ENCODE measurements at regions of chr1 and their contacts with region 1.

Region 1: GRCh38 chr1:34013958-34014737 is 150.3 kb downstream of the HMGB4 start:
- DNase-seq: peak in 1 of 2 donors; percentile 55
- ATAC-seq: peak; percentile 44
- H3K4me3 ChIP-seq: no peak overlapping the region
- H3K27ac ChIP-seq: no peak overlapping the region
- H3K4me1 ChIP-seq: no peaks in the 10 kb centered on the region
- H3K27me3 ChIP-seq: no peaks in the 10 kb centered on the region

Region 2: GRCh38 chr1:33633019-33633801 is 380.9 kb before region 1 on chr1:
- intact Hi-C with region 1: loop called (anchors 10 kb)
- DNase-seq: peak; percentile 93 to 96
- ATAC-seq: peak; percentile 90
- H3K4me3 ChIP-seq: no peak overlapping the region
- H3K27ac ChIP-seq: no peak overlapping the region
- H3K4me1 ChIP-seq: no peaks in the 10 kb centered on the region
- H3K27me3 ChIP-seq: no peaks in the 10 kb centered on the region

Region 3: DNA sequence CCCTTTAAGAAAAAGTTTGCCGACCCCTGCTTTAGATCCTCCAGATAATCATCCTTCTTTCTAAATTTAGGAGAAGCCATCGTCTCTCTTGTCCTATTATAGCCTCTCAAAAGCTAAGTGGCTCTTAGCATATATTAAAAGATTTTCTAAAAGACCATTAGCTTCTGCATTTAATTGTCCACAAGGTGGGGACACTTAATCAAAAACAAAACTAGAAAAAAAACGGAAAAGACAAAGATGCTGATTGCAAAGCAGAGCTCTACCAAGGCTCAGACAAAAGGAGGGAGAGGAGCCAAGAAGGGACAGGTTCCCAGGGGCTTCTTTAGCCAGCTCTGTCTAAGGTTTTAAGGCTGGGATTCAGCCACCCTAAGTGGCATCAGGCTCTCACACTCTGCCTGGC is 278.5 kb before region 1 on chr1:
- intact Hi-C with region 1: loop called in 1 of 2 experiments (anchors 5 kb)
- DNase-seq: no peak
- ATAC-seq: no peak
- H3K4me3 ChIP-seq: no peak overlapping the region
- H3K27ac ChIP-seq: no peak overlapping the region
- H3K4me1 ChIP-seq: no peaks in the 10 kb centered on the region
- H3K27me3 ChIP-seq: no peaks in the 10 kb centered on the region

Region 4: GRCh38 chr1:33842348-33842747 is 171.8 kb before region 1 on chr1:
- intact Hi-C with region 1: loop called in 1 of 2 experiments (anchors 10 kb)
- DNase-seq: no peak
- ATAC-seq: no peak
- H3K4me3 ChIP-seq: no peak overlapping the region
- H3K27ac ChIP-seq: no peak overlapping the region
- H3K4me1 ChIP-seq: no peaks in the 10 kb centered on the region
- H3K27me3 ChIP-seq: no peaks in the 10 kb centered on the region

Region 5: DNA sequence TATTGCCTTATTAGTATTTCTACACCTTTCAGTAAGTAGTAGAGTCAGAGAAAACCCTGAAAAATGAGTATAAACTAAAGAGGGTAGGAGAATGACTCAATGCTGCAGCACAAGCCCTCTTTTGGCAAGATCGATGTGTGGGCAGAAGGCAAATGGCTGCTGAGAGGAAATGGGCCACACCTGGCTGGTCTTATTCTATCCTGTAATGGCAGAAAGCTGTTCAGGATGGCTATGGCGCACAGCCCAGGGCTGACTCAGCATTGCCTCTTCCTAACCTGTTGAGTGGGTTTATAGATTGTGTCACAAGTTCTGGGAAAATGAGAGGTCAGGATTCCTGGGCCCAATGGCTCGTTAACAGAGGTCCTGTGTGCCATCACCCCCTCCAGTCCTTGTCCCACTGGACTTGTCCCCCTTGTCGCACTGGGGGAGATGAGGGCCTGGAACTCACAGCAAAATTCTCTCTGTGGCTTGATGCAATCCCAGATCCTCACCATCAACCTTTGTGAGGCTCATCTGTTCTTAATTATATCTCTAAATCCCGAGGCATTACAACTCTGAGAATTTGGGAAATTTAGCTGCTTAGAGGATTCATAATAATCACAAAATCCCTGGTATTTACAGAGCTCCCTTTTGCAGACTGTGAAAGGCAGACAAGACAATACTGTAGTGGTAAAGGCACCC is 137.0 kb before region 1 on chr1:
- intact Hi-C with region 1: loop called in 1 of 2 experiments (anchors 5 kb)
- DNase-seq: peak; percentile 83 to 90
- ATAC-seq: no peak
- H3K4me3 ChIP-seq: no peak overlapping the region
- H3K27ac ChIP-seq: no peak overlapping the region
- H3K4me1 ChIP-seq: peaks cover 0 to 11% of the 10 kb centered on the region in 2 donors
- H3K27me3 ChIP-seq: no peaks in the 10 kb centered on the region